Left ventricle myocardium inferior (tissue), 1 donor: ENCODE measurements at regions of chr18 and their contacts with region 1.

Region 1: GRCh38 chr18:59070181-59070912 is 69.3 kb upstream of the SEC11C start:
- DNase-seq: peak; percentile 86
- H3K4me3 ChIP-seq: no peak overlapping the region
- H3K27ac ChIP-seq: no peak overlapping the region
- H3K4me1 ChIP-seq: no peaks in the 10 kb centered on the region
- H3K27me3 ChIP-seq: no peaks in the 10 kb centered on the region
- CTCF ChIP-seq: peak; percentile 93

Region 2: GRCh38 chr18:58529714-58530354 is 540.5 kb before region 1 on chr18:
- intact Hi-C with region 1: loop called (anchors 10 kb)
- DNase-seq: peak; percentile 49
- H3K4me3 ChIP-seq: no peak overlapping the region
- H3K27ac ChIP-seq: no peak overlapping the region
- H3K4me1 ChIP-seq: peaks cover 8% of the 10 kb centered on the region
- H3K27me3 ChIP-seq: no peaks in the 10 kb centered on the region
- CTCF ChIP-seq: peak; percentile 77

Region 3: GRCh38 chr18:58781627-58782194 is 288.6 kb before region 1 on chr18:
- intact Hi-C with region 1: loop called (anchors 5 kb)
- DNase-seq: peak; percentile 68
- H3K4me3 ChIP-seq: no peak overlapping the region
- H3K27ac ChIP-seq: peak overlapping the region; percentile 64
- H3K4me1 ChIP-seq: peaks cover 18% of the 10 kb centered on the region
- H3K27me3 ChIP-seq: no peaks in the 10 kb centered on the region
- CTCF ChIP-seq: peak; percentile 90

Region 4: GRCh38 chr18:58863539-58864145 is 206.7 kb before region 1 on chr18:
- intact Hi-C with region 1: loop called (anchors 10 kb)
- DNase-seq: peak; percentile 60
- H3K4me3 ChIP-seq: peak overlapping the region; percentile 73
- H3K27ac ChIP-seq: peak overlapping the region; percentile 99
- H3K4me1 ChIP-seq: peaks cover 88% of the 10 kb centered on the region
- H3K27me3 ChIP-seq: no peaks in the 10 kb centered on the region
- CTCF ChIP-seq: no peak

Region 5: GRCh38 chr18:58911766-58912165 is 158.6 kb before region 1 on chr18:
- intact Hi-C with region 1: no loop called
- DNase-seq: peak; percentile 26
- H3K4me3 ChIP-seq: peak overlapping the region; percentile 42
- H3K27ac ChIP-seq: peak overlapping the region; percentile 84
- H3K4me1 ChIP-seq: peaks cover 87% of the 10 kb centered on the region
- H3K27me3 ChIP-seq: no peaks in the 10 kb centered on the region
- CTCF ChIP-seq: no peak

Region 6: DNA sequence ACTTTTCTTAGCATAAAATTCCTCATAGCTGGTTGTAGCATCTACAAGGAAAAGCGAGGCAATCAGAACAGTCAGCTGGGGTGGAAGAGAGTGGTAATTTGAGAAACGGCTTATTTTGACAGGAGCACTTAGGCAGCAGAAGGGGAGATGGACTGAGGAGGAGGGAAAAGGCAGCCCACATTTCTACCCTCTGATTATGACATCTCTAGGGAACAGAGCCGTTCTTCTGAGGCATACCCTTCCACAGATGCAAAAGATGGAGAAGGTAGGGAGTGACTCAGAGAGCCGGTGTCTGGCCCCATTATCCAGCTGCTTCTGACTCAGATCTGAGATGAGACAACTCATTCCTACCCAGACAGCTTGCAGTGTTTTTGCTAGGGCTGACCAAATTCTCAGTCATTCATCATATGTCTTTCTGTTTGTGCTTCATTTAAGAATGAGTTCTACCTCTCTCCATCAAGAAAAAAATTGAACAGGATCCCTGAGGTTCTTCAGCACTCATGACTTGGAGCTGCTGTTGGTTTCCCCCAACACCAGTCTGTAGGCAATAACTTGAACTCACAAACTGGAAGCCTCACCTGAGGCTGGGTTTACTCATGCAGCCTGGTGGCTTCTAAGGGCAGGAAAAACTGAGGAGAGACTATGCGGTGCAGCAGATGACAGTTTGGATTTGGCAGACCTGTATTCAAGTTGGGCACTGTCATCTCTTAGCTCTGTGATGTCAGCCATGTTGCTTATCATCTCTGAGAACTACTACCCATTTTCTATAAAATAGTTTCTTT is 53.4 kb after region 1 on chr18:
- intact Hi-C with region 1: no loop called
- DNase-seq: no peak
- H3K4me3 ChIP-seq: no peak overlapping the region
- H3K27ac ChIP-seq: no peak overlapping the region
- H3K4me1 ChIP-seq: no peaks in the 10 kb centered on the region
- H3K27me3 ChIP-seq: peaks cover 95% of the 10 kb centered on the region
- CTCF ChIP-seq: no peak

Region 7: DNA sequence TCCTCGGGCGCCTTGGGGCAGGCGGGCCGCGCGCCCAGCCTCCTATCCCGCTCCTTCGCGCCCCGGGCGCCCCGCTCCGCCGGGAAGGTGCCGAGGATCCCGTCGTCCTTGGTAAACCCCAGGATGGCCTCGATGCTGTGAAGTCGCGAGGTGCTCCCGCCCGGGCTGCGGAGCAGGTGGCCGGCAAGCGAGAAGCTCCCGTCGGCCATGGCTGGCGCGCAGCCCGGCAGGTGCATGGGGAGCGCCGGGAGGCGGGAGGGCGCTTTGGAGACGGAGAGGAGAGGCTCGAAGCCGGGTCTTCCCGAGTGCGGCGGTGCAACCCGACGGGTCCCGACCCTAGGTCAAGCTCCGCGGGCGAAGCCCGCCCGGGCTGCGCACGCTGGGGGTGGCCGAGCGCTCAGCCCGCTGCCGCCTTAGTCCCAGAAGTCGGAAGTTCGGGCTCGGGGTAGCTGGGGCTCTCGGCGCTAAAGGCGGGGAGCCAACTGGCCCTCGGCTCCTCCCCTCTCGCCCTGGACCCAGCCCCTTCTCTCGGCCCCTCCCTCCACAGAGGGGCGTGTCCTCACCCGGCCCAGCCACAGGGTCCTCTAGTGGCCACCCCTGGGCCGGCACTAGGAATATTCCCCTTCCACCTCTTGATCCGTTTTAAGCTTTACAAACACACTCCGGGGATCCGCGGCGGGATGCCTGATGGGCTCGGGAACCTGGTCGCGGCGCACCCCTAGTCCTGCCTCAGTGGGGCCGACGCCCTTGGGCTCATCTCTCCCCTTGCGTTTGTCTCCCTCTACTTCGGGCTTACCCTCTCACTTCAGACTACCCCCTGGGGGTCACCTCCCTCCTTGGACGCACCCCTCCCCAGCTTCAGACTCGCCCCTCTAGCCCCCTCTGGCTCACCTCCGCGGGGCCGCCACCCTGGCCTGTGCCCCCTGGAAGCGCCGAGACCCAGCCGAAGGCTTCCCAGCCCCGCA is 202.9 kb after region 1 on chr18 and contains the start of gene RAX:
- intact Hi-C with region 1: no loop called
- DNase-seq: no peak
- H3K4me3 ChIP-seq: peak within 1 kb of the TSS; percentile 54
- H3K27ac ChIP-seq: no peak within 1 kb of the TSS
- H3K4me1 ChIP-seq: peaks cover 30% of the 10 kb centered on the region
- H3K27me3 ChIP-seq: no peaks in the 10 kb centered on the region
- CTCF ChIP-seq: no peak
- total RNA-seq, gene RAX: not detected